ENCODE measurements at regions of chr6 and their contacts with region 1.

Region 1: GRCh38 chr6:63764318-63764916 is 128.8 kb downstream of the PHF3 start:
- DNase-seq: no peak
- H3K4me3 ChIP-seq: no peak overlapping the region
- H3K27me3 ChIP-seq: no peaks in the 10 kb centered on the region
- CTCF ChIP-seq: peak; percentile 31; the same call in 1 of the 2 replicates

Region 2: GRCh38 chr6:63352587-63353285 is 411.7 kb before region 1 on chr6:
- CTCF ChIA-PET with region 1: interaction called, 16 read pairs
- POLR2A ChIA-PET with region 1: no interaction called
- DNase-seq: no peak
- H3K4me3 ChIP-seq: no peak overlapping the region
- H3K27me3 ChIP-seq: no peaks in the 10 kb centered on the region
- CTCF ChIP-seq: peak; percentile 32; the same call in 1 of the 2 replicates

Measured in BJ (cell line).